ENCODE measurements at regions of chr4 and their contacts with region 1.

Region 1: GRCh38 chr4:147760695-147761094 is 28.8 kb downstream of the ARHGAP10 start:
- DNase-seq: no peak
- H3K4me3 ChIP-seq: no peak overlapping the region
- H3K27ac ChIP-seq: peak overlapping the region; percentile 26; the same call in 1 of the 2 replicates
- H3K4me1 ChIP-seq: no peaks in the 10 kb centered on the region; the same call in 1 of the 2 replicates
- H3K27me3 ChIP-seq: no peaks in the 10 kb centered on the region
- CTCF ChIP-seq: no peak

Region 2: DNA sequence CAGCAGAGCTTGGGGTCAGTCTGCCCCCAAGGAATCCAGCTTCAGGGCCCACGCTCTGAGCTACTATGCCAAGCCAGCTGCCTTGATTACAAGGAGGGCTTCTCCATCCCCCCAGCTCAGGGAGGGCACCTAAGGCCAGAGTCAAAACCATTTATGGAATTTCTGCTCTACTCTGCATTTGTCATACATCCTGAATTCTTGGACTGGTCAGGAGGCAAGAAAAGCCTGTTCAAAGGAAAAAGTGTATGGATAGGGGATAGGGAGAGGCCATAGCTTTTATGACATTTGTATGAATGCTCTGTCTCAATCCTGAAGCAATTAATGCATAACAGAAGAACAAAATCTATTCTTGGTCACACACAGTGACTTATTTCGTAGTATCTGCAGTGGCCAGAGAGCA is 247.6 kb before region 1 on chr4:
- CTCF ChIA-PET with region 1: no interaction called
- POLR2A ChIA-PET with region 1: interaction called, 16 read pairs
- intact Hi-C with region 1: no loop called
- DNase-seq: no peak
- H3K4me3 ChIP-seq: no peak overlapping the region
- H3K27ac ChIP-seq: no peak overlapping the region
- H3K4me1 ChIP-seq: no peaks in the 10 kb centered on the region
- H3K27me3 ChIP-seq: no peaks in the 10 kb centered on the region
- CTCF ChIP-seq: no peak

Region 3: GRCh38 chr4:147741190-147741785 is 19.4 kb before region 1 on chr4:
- CTCF ChIA-PET with region 1: interaction called, 5 read pairs
- POLR2A ChIA-PET with region 1: interaction called, 11 read pairs
- intact Hi-C with region 1: no loop called
- DNase-seq: peak; percentile 33 to 61
- H3K4me3 ChIP-seq: no peak overlapping the region
- H3K27ac ChIP-seq: peak overlapping the region; percentile 53; the same call in 1 of the 2 replicates
- H3K4me1 ChIP-seq: peaks cover 22% of the 10 kb centered on the region
- H3K27me3 ChIP-seq: no peaks in the 10 kb centered on the region
- CTCF ChIP-seq: no peak

Measured in PC-9 (cell line).